ENCODE measurements at regions of chr6 and their contacts with region 1.

Region 1: DNA sequence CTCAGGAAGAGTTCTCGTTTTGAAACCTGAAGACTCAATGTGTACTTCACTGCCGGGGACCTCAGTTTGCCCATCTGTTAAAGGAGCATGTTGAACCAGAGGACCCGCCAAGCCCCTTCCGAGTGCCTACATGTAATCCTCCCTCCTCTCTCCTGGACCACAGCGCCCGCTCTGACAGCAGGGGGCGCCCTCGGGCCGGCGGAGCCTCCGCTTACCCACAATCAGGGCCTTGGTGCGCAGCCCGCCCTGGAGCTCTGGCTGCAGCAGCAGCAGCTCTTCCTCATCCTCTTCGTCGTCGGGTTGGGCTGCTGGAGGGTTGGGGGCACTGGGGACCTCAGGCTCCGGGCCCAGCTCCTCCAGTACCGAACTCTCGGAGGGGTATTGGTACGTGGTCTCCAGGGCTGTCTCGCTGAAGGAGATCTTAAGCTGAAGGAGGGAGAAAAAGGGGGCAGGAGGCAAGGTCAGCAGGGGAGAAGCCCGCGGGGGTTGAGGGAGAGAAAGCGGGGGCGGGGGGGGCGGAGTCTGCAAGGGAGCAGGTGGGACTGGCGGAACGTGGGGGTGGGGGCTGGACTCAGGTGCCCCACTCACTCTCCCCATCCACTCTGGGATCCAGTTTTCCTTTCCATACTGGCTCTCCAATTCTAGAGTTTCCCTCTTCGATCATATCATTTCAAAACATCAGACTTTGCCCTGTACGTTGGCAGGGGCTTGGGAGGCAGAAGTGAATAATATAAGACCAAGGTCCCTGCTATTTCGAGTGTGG is 6.3 kb upstream of the DHX16 start:
- DNase-seq: peak; percentile 67 to 76
- ATAC-seq: peak; percentile 80 to 88; a peak in 5 of 6 replicates
- H3K4me3 ChIP-seq: 0 out of 3 replicates have a peak overlapping the region, but pooled peaks have one; percentile 19
- H3K27ac ChIP-seq: peak overlapping the region; percentile 59 to 87
- H3K4me1 ChIP-seq: peaks cover 37% of the 10 kb centered on the region
- CTCF ChIP-seq: peak; percentile 85
- EP300 ChIP-seq: no peak
- POLR2A ChIP-seq: no peak
- RAD21 ChIP-seq: peak; percentile 89 to 90

Region 2: DNA sequence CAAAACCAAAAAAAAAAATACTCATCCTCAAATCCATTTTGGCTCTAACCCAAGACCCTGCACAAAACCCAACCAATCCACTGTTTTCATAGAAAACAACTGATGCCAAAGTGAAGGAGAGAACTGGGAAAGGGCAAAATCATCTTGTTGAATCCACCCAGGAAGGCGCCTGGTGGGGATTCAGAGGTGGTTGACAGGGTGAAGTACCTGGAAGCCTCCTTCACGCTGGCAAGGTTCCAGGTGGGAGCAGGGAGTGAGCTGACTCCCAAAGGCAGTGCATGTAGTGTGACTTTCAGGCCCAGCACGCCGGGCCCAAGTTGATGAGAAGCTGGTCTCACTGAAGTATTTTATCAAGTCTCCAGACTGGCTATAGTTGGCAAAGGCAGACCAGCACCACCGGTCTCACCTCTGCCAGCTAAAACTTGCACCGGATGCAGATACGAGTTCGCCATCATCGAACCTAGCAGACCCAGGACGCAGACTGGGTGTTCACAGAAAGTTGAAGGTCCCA is 78.6 kb before region 1 on chr6:
- CTCF ChIA-PET with region 1: no interaction called
- POLR2A ChIA-PET with region 1: no interaction called
- DNase-seq: peak in 1 of 2 experiments; percentile 26
- ATAC-seq: no peak
- H3K4me3 ChIP-seq: no peak overlapping the region
- H3K27ac ChIP-seq: no peak overlapping the region
- H3K4me1 ChIP-seq: no peaks in the 10 kb centered on the region
- CTCF ChIP-seq: no peak
- EP300 ChIP-seq: no peak
- POLR2A ChIP-seq: no peak
- RAD21 ChIP-seq: no peak

Region 3: DNA sequence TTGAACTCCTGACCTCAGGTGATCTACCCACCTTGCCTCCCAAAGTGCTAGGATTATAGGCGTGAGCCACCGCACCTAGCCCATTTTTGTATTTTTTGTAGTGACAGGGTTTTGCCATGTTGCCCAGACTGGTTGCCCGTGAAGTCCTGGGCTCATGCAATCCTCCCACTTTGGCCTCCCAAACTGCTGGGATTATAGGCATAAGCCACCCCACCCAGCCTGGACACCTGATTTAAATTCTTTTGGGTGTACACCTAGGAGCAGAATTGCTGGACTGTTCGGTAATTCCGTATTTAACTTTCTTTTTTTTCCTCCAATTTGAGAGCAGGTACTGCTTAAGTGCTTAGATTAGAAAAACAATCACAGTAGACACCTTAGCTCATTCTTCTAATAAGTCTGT is 17.3 kb after region 1 on chr6:
- CTCF ChIA-PET with region 1: interaction called, 84 read pairs
- POLR2A ChIA-PET with region 1: interaction called, 4 read pairs
- DNase-seq: no peak
- ATAC-seq: no peak
- H3K4me3 ChIP-seq: no peak overlapping the region
- H3K27ac ChIP-seq: peak overlapping the region in 1 of 2 experiments; percentile 67; a peak in 1 of 6 replicates
- H3K4me1 ChIP-seq: peaks cover 18% of the 10 kb centered on the region
- CTCF ChIP-seq: no peak
- EP300 ChIP-seq: no peak
- POLR2A ChIP-seq: no peak
- RAD21 ChIP-seq: no peak

Region 4: DNA sequence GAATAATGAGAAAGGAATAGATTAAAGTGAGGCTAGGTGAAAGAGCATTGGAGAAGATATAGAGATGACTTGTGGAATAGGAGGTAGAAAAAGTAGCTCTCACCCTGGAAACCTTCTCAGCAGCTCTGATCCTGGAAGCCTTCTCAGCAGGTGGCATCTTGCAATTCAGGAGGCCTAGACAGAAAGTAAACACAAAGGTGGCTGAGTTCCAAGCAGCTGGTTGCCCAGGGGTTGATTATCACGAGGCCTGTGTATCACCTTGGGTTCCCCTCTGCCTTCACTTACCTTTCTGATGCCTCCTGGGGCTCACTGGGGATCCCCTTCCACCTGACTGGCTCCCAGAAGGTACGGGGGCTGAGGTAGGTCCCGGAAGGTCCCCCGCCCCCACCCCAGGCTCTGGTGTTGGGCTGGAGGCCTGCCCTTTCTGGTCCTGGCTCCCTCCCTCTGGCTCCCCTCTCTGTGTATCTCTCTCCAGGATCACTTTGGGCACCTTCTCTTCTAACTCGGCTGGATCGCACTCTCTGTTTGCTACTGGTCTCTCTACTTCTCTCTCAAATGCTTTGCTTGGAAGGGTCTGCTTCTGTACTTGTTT is 28.2 kb after region 1 on chr6:
- CTCF ChIA-PET with region 1: interaction called, 17 read pairs
- POLR2A ChIA-PET with region 1: interaction called, 3 read pairs
- DNase-seq: peak in 1 of 2 experiments; percentile 47
- ATAC-seq: peak; percentile 62 to 65; a peak in 5 of 6 replicates
- H3K4me3 ChIP-seq: no peak overlapping the region
- H3K27ac ChIP-seq: peak overlapping the region; percentile 71 to 82
- H3K4me1 ChIP-seq: peaks cover 37% of the 10 kb centered on the region
- CTCF ChIP-seq: no peak
- EP300 ChIP-seq: no peak
- POLR2A ChIP-seq: no peak
- RAD21 ChIP-seq: no peak

Region 5: DNA sequence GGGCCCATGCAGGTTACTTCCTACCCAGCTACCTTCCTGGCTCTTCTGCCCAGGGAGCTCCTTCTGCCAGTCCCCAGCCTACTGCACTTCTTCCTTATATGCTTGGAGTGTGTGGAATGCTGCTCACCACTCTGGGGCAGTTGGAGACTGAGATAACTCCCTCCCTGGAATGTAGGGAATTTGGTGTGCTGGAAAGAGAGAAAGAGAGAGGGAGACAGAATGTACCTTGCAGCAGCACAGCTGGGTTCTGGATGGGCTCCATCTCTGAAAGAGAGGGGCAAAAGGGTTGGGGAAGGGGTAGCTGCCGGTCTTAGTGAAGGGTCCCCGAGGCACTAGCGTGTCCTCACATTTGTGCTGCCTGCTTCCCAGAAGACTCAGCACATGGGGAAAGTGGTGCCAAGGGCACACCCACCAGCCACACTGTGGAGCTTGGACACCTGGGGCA is 165.0 kb after region 1 on chr6:
- CTCF ChIA-PET with region 1: no interaction called
- POLR2A ChIA-PET with region 1: no interaction called
- DNase-seq: peak in 1 of 2 experiments; percentile 33
- ATAC-seq: peak; percentile 43 to 90; a peak in 4 of 6 replicates
- H3K4me3 ChIP-seq: no peak overlapping the region
- H3K27ac ChIP-seq: peak overlapping the region; percentile 39 to 55; a peak in 3 of 6 replicates
- H3K4me1 ChIP-seq: peaks cover 31% of the 10 kb centered on the region
- CTCF ChIP-seq: no peak
- EP300 ChIP-seq: no peak
- POLR2A ChIP-seq: no peak
- RAD21 ChIP-seq: no peak

Measured in A549 (cell line).